Activated naive CD4-positive, alpha-beta T cell treated with anti-CD3 and anti-CD28 coated beads for 36 hours (primary cell): ENCODE measurements at regions of chr14 and their contacts with region 1.

Region 1: DNA sequence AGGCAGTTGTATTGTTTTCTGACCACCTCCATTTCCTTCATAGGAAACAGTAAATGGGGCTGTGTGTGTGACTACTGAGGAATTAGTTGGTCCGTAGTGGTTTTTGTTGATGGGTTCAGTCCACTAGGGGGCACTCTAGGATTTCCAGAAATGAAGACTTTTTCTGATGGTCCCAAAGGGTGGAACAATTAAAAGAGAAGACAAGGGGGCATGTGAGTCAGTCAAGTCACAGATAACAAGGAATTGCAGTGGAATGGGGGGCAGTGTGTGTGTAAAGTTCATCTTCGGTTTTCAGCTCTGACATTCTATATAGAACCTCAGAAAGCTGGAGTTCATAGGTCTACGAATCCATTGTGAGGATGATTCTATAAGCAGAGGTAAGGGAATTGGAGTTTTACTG is 186.6 kb upstream of the OR4E1 start:
- DNase-seq: peak; percentile 64
- H3K4me3 Mint-ChIP-seq: peak overlapping the region; percentile 55
- H3K27ac Mint-ChIP-seq: peak overlapping the region; percentile 78
- H3K4me1 Mint-ChIP-seq: peaks cover 12% of the 10 kb centered on the region
- H3K27me3 Mint-ChIP-seq: no peaks in the 10 kb centered on the region

Region 2: DNA sequence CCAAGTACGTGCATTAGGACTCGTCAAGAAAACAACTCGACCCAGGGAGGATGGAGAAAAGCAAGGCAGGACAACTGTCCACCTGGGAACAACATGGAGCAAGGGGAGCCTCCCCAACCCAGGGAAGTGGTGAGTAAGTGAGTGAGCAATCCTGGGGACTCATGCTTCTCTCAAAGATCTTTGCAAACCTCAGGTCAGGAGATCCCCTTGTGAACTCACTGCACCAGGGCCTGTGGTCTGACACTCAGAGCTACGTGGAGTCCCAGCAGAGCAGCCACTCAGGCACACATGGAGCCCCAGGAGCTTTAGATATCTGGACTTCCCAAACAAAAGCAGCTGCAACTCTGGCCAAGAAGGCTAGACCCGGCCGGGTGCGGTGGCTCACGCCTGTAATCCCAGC is 692.1 kb before region 1 on chr14:
- CTCF ChIA-PET with region 1: no interaction called
- intact Hi-C with region 1: no loop called
- DNase-seq: peak; percentile 7
- H3K4me3 Mint-ChIP-seq: no peak overlapping the region
- H3K27ac Mint-ChIP-seq: no peak overlapping the region
- H3K4me1 Mint-ChIP-seq: no peaks in the 10 kb centered on the region
- H3K27me3 Mint-ChIP-seq: peaks cover 18% of the 10 kb centered on the region

Region 3: DNA sequence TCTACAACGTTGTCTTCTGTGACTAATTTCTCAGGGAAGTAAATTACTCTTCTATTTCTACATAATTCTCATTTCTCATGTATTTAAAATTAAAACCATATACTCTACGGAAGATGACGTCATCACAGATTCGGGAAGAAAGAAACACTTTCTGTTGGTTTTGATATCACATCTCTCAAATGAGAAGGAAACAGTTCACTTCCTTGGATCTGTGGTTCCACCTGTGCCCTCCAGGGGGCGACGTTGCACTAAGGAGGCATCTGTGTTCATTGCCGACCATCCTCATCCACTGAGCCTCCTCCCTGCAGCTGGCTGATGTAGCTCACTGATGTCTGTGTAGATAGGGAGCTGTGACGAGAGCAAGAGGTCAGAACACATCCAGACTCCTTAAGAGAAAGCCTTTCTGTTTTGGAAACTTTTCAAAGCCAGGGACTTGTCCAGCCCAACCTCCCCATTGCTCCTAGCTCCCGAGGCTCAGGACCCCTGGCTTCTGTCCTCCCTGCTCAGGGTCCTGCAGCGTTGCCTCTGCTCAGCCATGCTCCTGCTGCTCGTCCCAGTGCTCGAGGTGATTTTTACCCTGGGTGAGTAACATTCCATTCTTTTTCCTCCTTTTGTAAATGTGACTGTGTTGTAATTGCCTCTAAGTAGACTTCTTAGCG is 13.8 kb before region 1 on chr14:
- CTCF ChIA-PET with region 1: interaction called, 32 read pairs
- intact Hi-C with region 1: loop called (anchors 2 kb)
- DNase-seq: peak; percentile 88
- H3K4me3 Mint-ChIP-seq: peak overlapping the region; percentile 88
- H3K27ac Mint-ChIP-seq: peak overlapping the region; percentile 86
- H3K4me1 Mint-ChIP-seq: peaks cover 13% of the 10 kb centered on the region
- H3K27me3 Mint-ChIP-seq: peaks cover 15% of the 10 kb centered on the region

Region 4: DNA sequence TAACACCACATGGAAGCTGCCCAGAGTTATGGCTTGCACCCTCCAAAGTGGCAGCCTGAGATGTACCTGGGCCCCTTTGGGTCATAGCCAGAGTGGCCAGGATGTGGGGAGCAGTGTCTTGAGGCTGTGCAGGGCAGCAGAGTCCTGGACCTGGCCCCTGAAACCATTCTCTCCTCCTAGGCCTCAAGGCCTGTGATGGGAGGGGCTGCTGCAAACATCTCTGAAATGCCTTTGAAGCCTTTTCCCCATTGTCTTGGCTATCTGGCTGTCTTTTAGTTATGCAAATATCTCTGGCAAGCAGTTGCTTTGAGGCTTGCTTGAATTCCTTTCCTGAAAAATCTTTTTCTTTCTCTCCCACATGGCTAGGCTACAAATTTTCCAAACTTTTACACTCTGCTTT is 372.3 kb after region 1 on chr14:
- CTCF ChIA-PET with region 1: no interaction called
- intact Hi-C with region 1: no loop called
- DNase-seq: no peak
- H3K4me3 Mint-ChIP-seq: no peak overlapping the region
- H3K27ac Mint-ChIP-seq: no peak overlapping the region
- H3K4me1 Mint-ChIP-seq: peaks cover 2% of the 10 kb centered on the region
- H3K27me3 Mint-ChIP-seq: no peaks in the 10 kb centered on the region